K562 (cell line): ENCODE measurements at regions of chr16 and their contacts with region 1.

Region 1: GRCh38 chr16:2520092-2520783 is at the start of gene AMDHD2:
- DNase-seq: peak; percentile 81 to 95 (median 88)
- ATAC-seq: peak; percentile 86
- H3K4me3 ChIP-seq: peak within 1 kb of the TSS; percentile 69
- H3K27ac ChIP-seq: peak within 1 kb of the TSS; percentile 82
- H3K4me1 ChIP-seq: peaks cover 32 to 61% of the 10 kb centered on the region in 2 experiments
- H3K27me3 ChIP-seq: no peaks in the 10 kb centered on the region
- CTCF ChIP-seq: no peak
- EP300 ChIP-seq: no peak
- POLR2A ChIP-seq: peak; percentile 72
- RAD21 ChIP-seq: 0 out of 4 replicates have a peak, but pooled peaks of 1 of the 2 experiments have one; percentile 4
- polyA plus RNA-seq, gene AMDHD2: 0.38 TPM in 1 of 2 experiments, not detected in the other

Region 2: DNA sequence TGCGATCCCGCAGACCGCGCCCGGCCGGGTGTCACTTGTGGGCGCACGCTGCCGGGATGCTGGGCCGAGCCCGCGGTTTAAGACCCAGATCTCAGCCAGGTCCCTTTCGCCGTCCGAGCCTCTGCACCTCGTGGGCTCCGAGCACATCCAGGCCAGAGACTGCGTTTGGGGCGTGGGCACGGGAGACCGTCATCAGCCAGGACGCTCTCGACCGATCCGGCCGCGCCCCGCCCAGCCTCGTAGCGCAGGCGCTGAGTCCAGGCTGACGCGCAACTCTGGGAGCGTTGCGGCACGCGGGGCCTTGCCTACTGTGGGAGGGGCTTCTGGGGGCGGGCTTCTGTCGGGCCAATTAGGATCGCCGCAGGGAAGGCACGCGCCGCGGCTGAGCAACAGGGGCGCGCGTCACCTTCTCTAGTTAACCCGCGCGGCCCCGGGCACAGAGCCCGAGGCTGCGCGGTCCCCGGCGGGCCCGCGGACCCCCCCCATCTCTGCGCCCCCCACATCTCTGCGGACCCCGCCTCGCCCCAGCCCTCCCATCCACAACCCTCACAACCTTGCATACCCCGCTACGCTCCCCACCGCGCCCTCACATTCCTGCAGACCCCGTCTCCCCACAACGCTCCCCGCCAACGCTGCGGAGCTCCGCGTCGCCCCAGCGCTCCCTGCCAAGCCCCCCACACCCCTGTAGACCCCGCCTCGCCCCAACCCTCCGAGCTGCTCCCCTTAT is 11.7 kb after region 1 on chr16:
- CTCF ChIA-PET with region 1: no interaction called
- POLR2A ChIA-PET with region 1: interaction called, 45 read pairs
- in situ Hi-C with region 1: no loop called
- intact Hi-C with region 1: no loop called
- DNase-seq: peak; percentile 91 to 99 (median 94)
- ATAC-seq: peak; percentile 97
- H3K4me3 ChIP-seq: peak overlapping the region; percentile 51
- H3K27ac ChIP-seq: peak overlapping the region; percentile 70
- H3K4me1 ChIP-seq: peaks cover 15 to 68% of the 10 kb centered on the region in 2 experiments; a peak in 4 of 5 replicates
- H3K27me3 ChIP-seq: no peaks in the 10 kb centered on the region
- CTCF ChIP-seq: no peak
- EP300 ChIP-seq: no peak
- POLR2A ChIP-seq: peak; percentile 70
- RAD21 ChIP-seq: no peak

Region 3: GRCh38 chr16:3023669-3024478 is 503.6 kb after region 1 on chr16 and contains the starts of genes HCFC1R1 and THOC6:
- CTCF ChIA-PET with region 1: no interaction called
- POLR2A ChIA-PET with region 1: no interaction called
- in situ Hi-C with region 1: no loop called
- intact Hi-C with region 1: no loop called
- DNase-seq: peak; percentile 66 to 100 (median 78)
- ATAC-seq: peak; percentile 73
- H3K4me3 ChIP-seq: peak within 1 kb of the TSS; percentile 82
- H3K27ac ChIP-seq: peak within 1 kb of the TSS; percentile 90
- H3K4me1 ChIP-seq: peaks cover 25 to 87% of the 10 kb centered on the region in 2 experiments
- H3K27me3 ChIP-seq: peaks cover 0 to under 1% of the 10 kb centered on the region in 2 experiments; a peak in 2 of 5 replicates
- CTCF ChIP-seq: no peak
- EP300 ChIP-seq: no peak
- POLR2A ChIP-seq: peak; percentile 95
- RAD21 ChIP-seq: peak in 1 of 2 experiments; percentile 8; a peak in 1 of 4 replicates
- polyA plus RNA-seq, gene HCFC1R1: 2.2 to 4.1 TPM
- polyA plus RNA-seq, gene THOC6: 2.5 to 5.5 TPM